OCI-LY7 (cell line): ENCODE measurements at regions of chr2 and their contacts with region 1.

Region 1: GRCh38 chr2:28224648-28225472 is 167.8 kb upstream of the FOSL2 start:
- DNase-seq: no peak
- H3K4me3 ChIP-seq: no peak overlapping the region
- H3K27ac ChIP-seq: no peak overlapping the region
- H3K4me1 ChIP-seq: no peaks in the 10 kb centered on the region
- CTCF ChIP-seq: no peak

Region 2: DNA sequence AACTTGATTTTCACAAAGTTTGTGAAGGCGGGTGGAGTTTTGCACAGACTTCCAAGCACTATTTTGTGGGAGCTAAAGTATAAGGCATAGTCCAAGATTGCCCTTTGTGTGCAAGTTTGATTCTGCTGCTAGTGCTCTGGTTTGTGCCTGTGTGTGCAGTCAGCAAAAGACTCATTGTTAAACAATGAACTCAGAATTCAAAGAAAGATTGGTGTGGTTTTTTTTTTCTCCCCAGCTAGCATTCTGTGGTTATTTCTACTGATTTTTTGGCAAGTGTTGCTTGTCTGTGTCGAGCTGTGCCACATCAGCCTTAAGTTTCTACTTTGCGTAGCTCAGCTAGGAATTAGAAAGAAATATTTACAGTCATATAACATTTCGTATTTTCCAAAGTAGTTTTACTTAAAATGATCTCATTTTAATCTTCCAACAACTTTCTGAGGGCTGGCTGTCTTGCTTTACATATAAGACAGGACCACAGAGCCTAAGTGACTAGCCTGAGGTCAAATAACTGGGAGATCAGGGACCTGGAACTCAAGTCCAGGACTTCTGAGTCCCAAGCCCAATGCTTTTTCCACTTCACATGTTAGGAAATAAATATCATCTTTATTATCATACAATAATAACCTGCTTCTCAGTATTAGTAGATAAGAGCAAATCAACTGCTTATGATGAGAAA is 264.5 kb before region 1 on chr2:
- CTCF ChIA-PET with region 1: no interaction called
- POLR2A ChIA-PET with region 1: interaction called, 14 read pairs
- intact Hi-C with region 1: no loop called
- DNase-seq: no peak
- H3K4me3 ChIP-seq: no peak overlapping the region
- H3K27ac ChIP-seq: no peak overlapping the region
- H3K4me1 ChIP-seq: no peaks in the 10 kb centered on the region
- CTCF ChIP-seq: no peak

Region 3: GRCh38 chr2:28239207-28239606 is 14.3 kb after region 1 on chr2:
- CTCF ChIA-PET with region 1: no interaction called
- POLR2A ChIA-PET with region 1: no interaction called
- intact Hi-C with region 1: no loop called
- DNase-seq: no peak
- H3K4me3 ChIP-seq: no peak overlapping the region
- H3K27ac ChIP-seq: no peak overlapping the region
- H3K4me1 ChIP-seq: no peaks in the 10 kb centered on the region
- CTCF ChIP-seq: no peak